ENCODE measurements at regions of chr2 and their contacts with region 1.

Region 1: GRCh38 chr2:156526950-156527636 is 90.9 kb downstream of the GPD2 start:
- DNase-seq: no peak
- H3K4me3 Mint-ChIP-seq: no peak overlapping the region
- H3K27ac Mint-ChIP-seq: no peak overlapping the region
- H3K4me1 Mint-ChIP-seq: peaks cover 5% of the 10 kb centered on the region
- H3K27me3 Mint-ChIP-seq: no peaks in the 10 kb centered on the region

Region 2: DNA sequence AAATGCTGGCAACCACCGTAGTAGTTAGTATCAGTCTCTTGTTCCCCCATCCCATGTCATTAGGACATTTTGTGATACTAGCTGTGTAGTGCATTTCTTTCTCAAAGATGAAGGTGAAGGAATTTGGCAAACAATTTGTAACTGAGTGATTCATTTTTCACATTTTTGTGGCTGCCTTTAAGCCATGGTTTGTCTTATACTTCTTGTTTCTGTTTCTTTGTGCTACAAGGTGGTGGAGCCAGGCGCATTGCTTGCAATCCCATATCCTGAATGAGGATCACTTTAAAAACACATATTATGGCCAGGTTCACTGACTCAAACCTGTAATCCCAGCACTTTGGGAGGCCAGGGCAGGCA is 50.3 kb before region 1 on chr2:
- intact Hi-C with region 1: loop called (anchors 5 kb)
- DNase-seq: peak; percentile 11
- H3K4me3 Mint-ChIP-seq: peak overlapping the region; percentile 76
- H3K27ac Mint-ChIP-seq: peak overlapping the region; percentile 92
- H3K4me1 Mint-ChIP-seq: peaks cover 69% of the 10 kb centered on the region
- H3K27me3 Mint-ChIP-seq: no peaks in the 10 kb centered on the region

Region 3: DNA sequence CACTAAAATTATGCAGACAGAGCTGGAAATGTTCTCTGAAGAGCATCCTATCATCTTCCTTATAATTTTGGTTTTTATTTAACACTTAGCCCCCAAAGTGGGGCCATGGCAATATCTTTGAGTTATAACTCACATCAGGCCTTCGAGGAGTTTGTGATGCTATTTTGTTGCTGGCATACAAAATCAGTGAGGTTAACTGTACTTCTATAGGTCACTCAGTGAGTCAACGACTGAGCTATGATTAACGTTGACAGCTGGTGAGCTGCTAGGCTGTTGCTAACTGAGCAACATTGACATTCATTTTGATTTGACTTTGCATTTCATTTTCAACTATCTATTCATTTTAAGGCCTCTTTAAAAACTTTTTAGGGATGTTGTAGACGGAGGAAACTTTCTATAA is 40.9 kb before region 1 on chr2:
- intact Hi-C with region 1: loop called (anchors 5 kb)
- DNase-seq: no peak
- H3K4me3 Mint-ChIP-seq: no peak overlapping the region
- H3K27ac Mint-ChIP-seq: no peak overlapping the region
- H3K4me1 Mint-ChIP-seq: peaks cover 76% of the 10 kb centered on the region
- H3K27me3 Mint-ChIP-seq: no peaks in the 10 kb centered on the region